Ascending aorta (tissue), 2 donors: ENCODE measurements at regions of chr1 and their contacts with region 1.

Region 1: DNA sequence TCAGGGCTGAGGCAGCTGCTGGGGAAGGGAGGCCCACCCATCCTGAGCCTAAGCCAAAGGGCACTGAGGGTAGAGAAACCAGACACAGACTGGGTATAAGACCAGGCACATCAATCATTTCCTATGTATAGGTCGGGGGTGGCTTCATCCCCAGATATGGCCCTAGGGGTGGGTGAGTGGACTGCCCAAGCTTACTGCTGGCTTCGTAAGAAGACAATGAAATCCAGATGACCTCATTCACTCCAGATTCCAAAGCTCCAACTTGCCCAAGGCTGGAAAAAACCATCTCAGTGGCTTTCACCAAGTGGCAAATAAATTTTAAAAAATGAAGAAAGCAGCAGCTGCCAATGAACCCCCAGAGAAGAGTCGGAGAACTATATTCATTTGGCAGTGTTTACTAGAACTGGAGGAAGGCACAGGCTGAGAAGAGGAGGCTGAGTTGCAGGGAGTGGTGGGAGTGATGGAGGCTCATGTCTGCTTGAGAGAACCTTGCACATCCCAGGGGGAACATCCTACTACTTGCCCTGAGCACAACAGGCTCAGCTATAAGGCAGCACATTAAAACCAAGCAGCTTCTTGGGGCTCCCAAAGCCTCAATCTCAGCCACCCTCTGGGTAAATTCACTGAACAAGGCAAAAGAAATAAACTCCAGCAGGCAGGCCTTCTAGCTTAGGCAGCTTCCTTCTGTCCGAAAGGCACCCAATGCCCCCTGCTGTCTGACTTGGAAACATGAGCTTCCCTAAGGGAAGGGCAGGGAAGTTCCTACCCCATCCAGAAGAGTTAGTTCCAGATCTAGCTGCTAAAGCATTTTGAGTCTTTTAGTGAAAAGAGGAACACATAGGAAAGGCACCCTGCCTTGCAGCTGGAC is 14.1 kb downstream of the PEA15 start:
- DNase-seq: peak in 1 of 2 donors; percentile 73
- H3K4me3 ChIP-seq: no peak overlapping the region
- H3K27ac ChIP-seq: peak overlapping the region; percentile 79 to 89
- H3K4me1 ChIP-seq: peaks cover 0 to 21% of the 10 kb centered on the region in 2 donors
- H3K27me3 ChIP-seq: no peaks in the 10 kb centered on the region
- CTCF ChIP-seq: peak; percentile 61 to 74 (median 65)

Region 2: DNA sequence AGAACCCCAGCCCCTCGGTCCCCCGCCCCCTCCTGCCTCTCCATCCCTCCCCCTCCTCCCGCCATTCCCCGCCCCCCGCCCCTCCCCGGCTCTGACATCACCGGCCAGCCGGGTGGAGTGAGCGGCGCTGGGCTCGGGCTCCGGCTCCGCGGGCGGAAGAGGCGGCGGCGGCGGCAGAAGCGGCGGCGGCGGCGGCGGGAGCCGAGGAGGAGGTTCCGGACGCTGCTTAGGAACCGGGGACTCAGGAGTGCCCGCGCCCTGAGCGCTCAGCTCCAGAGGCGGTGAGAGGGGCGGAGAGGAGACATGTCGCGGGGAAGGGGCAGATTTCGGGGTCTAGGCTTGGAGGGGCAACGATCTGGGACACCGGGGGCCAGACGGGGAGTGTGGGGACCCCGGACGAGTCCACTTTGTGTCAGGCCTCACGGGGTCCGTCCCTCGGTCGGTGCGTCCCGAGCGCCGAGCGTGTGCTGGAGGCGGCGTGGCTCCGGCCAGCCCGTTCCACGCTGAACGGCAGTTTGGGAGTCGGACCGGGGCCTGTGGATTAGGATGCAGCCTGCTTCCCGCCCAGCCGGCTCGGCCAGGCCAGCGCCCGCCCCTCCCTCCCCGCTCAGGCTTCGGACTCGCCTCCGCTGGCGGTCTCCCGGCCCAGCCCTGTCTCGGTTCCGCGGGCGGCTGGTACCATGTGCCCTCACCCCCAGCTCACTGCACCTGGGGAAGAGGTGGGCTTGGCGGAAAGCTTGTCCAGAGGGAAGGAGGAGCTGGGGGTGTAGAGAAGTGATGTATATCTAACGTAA is 13.9 kb before region 1 on chr1 and contains the start of gene PEA15:
- intact Hi-C with region 1: loop called (anchors 2 kb)
- DNase-seq: peak in 1 of 2 donors; percentile 85
- H3K4me3 ChIP-seq: peak within 1 kb of the TSS; percentile 87 to 94
- H3K27ac ChIP-seq: peak within 1 kb of the TSS; percentile 94 to 98
- H3K4me1 ChIP-seq: peaks cover under 1 to 42% of the 10 kb centered on the region in 2 donors
- H3K27me3 ChIP-seq: no peaks in the 10 kb centered on the region
- CTCF ChIP-seq: no peak
- total RNA-seq, gene PEA15: 178 TPM

Region 3: GRCh38 chr1:160291248-160292220 is 72.2 kb after region 1 on chr1:
- intact Hi-C with region 1: loop called (anchors 2 kb)
- DNase-seq: peak in 1 of 2 donors; percentile 72
- H3K4me3 ChIP-seq: no peak overlapping the region
- H3K27ac ChIP-seq: no peak overlapping the region
- H3K4me1 ChIP-seq: no peaks in the 10 kb centered on the region
- H3K27me3 ChIP-seq: no peaks in the 10 kb centered on the region
- CTCF ChIP-seq: peak; percentile 69 to 81 (median 74)

Region 4: DNA sequence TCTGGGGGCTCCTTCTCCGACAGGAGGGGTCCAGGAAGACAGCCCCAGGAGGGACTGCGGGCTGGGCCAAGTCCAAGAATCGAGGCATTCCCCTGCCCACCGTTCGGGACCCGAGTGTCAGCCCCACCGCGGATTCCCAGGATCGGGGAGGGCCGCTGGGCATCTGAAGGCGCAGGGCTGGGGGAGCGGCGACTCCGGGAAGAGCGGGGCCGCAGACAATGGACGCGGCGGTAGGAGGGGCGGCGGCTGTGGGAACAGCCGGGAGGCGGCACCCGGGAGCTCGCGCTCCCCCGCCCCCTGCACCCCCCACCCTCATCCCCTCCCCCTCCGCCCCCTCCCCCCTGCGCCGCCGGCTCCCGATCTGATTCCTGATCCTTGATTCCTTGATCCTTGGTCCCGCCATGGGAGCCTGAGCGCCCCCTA is 180.9 kb after region 1 on chr1 and contains the start of gene VANGL2:
- intact Hi-C with region 1: no loop called
- DNase-seq: peak in 1 of 2 donors; percentile 70
- H3K4me3 ChIP-seq: peak within 1 kb of the TSS; percentile 52 to 72
- H3K27ac ChIP-seq: no peak within 1 kb of the TSS
- H3K4me1 ChIP-seq: peaks cover 5 to 7% of the 10 kb centered on the region in 2 donors
- H3K27me3 ChIP-seq: peaks cover 4% of the 10 kb centered on the region
- CTCF ChIP-seq: no peak
- total RNA-seq, gene VANGL2: 0.96 TPM

Region 5: GRCh38 chr1:160544647-160545046 is 325.4 kb after region 1 on chr1:
- intact Hi-C with region 1: no loop called
- DNase-seq: no peak
- H3K4me3 ChIP-seq: no peak overlapping the region
- H3K27ac ChIP-seq: no peak overlapping the region
- H3K4me1 ChIP-seq: no peaks in the 10 kb centered on the region
- H3K27me3 ChIP-seq: no peaks in the 10 kb centered on the region
- CTCF ChIP-seq: peak in 2 of 3 experiments; percentile 9 to 11